Lower lobe of right lung (tissue), 2 donors: ENCODE measurements at regions of chr13 and their contacts with region 1.

Region 1: GRCh38 chr13:20828539-20829364 is 55.0 kb upstream of the EEF1AKMT1 start:
- DNase-seq: no peak
- ATAC-seq: peak; percentile 58 to 81
- H3K4me3 ChIP-seq: peak overlapping the region; percentile 35
- H3K27ac ChIP-seq: peak overlapping the region; percentile 42
- H3K4me1 ChIP-seq: peaks cover 16% of the 10 kb centered on the region
- H3K27me3 ChIP-seq: no peaks in the 10 kb centered on the region
- CTCF ChIP-seq: peak; percentile 80

Region 2: DNA sequence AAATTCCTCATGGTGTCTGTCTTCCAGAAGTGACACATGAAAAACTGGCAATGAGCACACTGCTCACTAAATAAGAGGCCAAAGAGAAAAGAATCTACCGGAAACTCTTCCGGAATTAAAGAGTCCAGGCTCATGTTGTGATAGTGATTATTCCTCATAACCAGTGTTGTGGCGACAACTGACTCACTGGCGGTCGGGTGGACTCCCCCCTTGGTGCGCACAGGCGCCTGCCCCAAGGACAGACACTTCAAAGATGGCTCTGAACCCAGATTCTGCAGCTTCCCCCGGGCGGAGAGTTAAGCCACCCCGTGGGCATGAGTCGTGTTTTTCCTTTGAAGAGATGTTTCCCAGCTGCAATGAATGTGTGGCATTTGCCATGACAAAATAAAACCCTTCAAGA is 115.0 kb before region 1 on chr13:
- intact Hi-C with region 1: loop called (anchors 5 kb)
- DNase-seq: no peak
- ATAC-seq: no peak
- H3K4me3 ChIP-seq: no peak overlapping the region
- H3K27ac ChIP-seq: no peak overlapping the region
- H3K4me1 ChIP-seq: peaks cover 4% of the 10 kb centered on the region
- H3K27me3 ChIP-seq: no peaks in the 10 kb centered on the region
- CTCF ChIP-seq: no peak